ENCODE measurements at regions of chr11 and their contacts with region 1.

Region 1: GRCh38 chr11:27309046-27309445 is 54.0 kb downstream of the CCDC34 start:
- DNase-seq: no peak
- H3K4me3 ChIP-seq: no peak overlapping the region
- H3K27ac ChIP-seq: no peak overlapping the region
- H3K4me1 ChIP-seq: no peaks in the 10 kb centered on the region
- H3K27me3 ChIP-seq: no peaks in the 10 kb centered on the region
- CTCF ChIP-seq: no peak
- POLR2A ChIP-seq: no peak

Region 2: DNA sequence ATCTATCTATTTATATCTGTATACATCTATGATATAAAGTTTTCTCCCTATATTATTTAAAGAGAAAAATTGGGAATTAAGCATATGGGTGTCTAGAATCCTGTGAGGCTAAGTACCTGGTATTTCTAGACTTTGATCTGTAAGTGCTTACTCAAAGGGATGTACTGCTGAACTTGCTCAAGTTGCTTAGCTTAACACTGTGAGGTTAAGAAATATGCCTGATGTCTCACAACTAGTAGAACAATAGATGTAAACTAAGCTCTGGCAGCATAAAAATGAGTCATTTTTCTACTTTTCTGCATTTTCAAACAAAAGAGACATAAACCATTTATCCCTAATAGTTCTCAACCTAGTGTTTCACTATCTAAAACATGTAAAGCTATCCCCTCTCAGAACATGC is 1721.5 kb before region 1 on chr11:
- intact Hi-C with region 1: no loop called
- DNase-seq: no peak
- H3K4me3 ChIP-seq: no peak overlapping the region
- H3K27ac ChIP-seq: no peak overlapping the region
- H3K4me1 ChIP-seq: no peaks in the 10 kb centered on the region
- H3K27me3 ChIP-seq: no peaks in the 10 kb centered on the region
- CTCF ChIP-seq: no peak
- POLR2A ChIP-seq: no peak

Region 3: DNA sequence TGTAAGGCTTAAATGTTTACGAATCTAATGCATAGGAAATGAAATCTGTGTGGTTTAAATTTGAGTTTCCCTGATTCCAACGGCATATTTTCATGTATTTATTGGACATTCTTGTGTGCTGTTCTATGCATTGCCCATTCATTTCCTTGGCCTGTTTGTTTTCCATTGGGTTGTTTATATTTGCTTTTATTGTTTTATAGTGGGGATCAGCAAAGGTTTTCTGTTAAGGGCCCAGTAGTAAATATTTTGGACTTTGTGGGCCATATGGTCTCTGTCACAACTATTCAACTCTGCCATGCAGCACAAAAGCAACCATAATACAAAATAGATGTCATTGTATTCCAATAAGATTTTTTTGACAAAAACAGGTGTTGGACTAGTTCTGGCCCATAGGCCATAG is 168.8 kb after region 1 on chr11:
- intact Hi-C with region 1: loop called (anchors 5 kb)
- DNase-seq: no peak
- H3K4me3 ChIP-seq: no peak overlapping the region
- H3K27ac ChIP-seq: no peak overlapping the region
- H3K4me1 ChIP-seq: no peaks in the 10 kb centered on the region
- H3K27me3 ChIP-seq: no peaks in the 10 kb centered on the region
- CTCF ChIP-seq: no peak
- POLR2A ChIP-seq: no peak